Activated naive CD8-positive, alpha-beta T cell treated with anti-CD3 and anti-CD28 coated beads, Interleukin-2, amount 10 ng/mL, durations not matched to agents 7 days and 5 days (primary cell): ENCODE measurements at regions of chr12 and their contacts with region 1.

Region 1: DNA sequence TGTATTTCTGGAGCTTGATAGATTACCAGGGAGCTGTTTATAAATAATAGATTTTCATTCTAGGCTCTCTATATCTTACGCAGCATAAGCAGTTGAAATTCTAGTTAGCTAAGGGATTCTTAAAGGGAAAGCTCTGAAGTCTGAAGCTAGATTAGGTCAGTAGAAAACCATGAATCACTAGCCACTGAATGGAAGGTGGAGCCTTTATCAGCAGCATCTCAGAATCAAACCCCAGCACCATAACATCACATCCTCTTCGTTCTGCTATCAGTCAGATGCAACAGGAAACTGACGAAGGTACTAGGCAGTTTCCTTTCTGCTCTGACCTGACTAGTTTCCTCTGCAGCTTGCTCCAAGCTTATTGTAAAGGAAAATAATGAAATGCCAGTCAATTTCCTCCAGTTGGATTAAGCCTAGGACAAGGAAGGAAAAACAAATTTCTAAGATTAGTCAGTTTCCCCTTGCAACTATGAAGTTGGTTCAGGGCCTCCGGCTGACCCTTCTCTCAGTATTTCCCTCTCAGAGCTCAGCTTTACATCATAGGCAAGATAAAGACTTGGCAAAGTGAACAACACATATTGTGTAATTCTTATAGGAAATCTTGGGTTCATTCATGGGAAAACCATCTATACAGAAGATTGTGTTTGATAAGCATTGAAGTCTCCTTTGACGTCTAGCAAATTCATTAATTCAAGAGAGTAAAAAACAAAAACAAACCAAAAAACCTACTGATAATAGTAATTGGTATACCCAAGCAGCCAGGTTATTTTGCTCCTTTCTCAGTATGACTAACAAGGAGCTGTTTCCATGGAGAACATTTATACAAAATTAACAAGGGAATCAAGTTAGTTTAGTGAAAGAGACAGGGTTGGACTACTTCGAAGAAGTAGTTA is 43.4 kb upstream of the CFAP54 start:
- DNase-seq: no peak
- ATAC-seq: peak; percentile 98
- H3K4me3 Mint-ChIP-seq: peak overlapping the region; percentile 63
- H3K27ac Mint-ChIP-seq: peak overlapping the region; percentile 92
- H3K4me1 Mint-ChIP-seq: peaks cover 40% of the 10 kb centered on the region
- H3K27me3 Mint-ChIP-seq: no peaks in the 10 kb centered on the region

Region 2: DNA sequence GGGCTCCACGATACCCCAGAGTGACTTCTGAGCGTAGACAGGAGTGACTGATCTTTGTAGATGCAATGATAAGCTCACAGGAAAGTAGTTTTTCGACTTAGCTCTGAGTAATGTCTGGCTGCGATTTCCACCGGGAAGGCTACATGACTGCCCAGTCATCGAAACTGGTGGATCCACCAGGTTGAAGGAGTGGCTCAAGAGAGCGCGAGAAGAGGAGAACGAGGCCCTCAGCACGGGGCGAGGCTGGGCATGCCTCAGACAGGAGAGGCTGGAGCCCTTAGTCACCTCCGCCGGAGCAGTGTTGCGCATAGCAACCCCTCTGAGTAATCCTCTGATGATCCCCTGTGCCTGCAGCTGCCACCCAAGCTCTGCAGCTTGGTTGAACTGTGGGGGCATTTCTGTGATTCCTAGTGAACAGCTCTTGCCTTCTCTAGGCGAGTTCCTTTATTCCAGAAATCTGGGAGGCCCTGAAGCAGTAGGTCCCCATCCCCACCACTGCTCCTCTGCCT is 226.2 kb before region 1 on chr12:
- POLR2A ChIA-PET with region 1: no interaction called
- DNase-seq: no peak
- ATAC-seq: no peak
- H3K4me3 Mint-ChIP-seq: no peak overlapping the region
- H3K27ac Mint-ChIP-seq: no peak overlapping the region
- H3K4me1 Mint-ChIP-seq: peaks cover 9% of the 10 kb centered on the region
- H3K27me3 Mint-ChIP-seq: no peaks in the 10 kb centered on the region

Region 3: GRCh38 chr12:96434107-96434506 is 11.8 kb before region 1 on chr12:
- POLR2A ChIA-PET with region 1: interaction called, 27 read pairs
- DNase-seq: peak; percentile 53
- ATAC-seq: peak; percentile 97
- H3K4me3 Mint-ChIP-seq: peak overlapping the region; percentile 59
- H3K27ac Mint-ChIP-seq: peak overlapping the region; percentile 84
- H3K4me1 Mint-ChIP-seq: peaks cover 24% of the 10 kb centered on the region
- H3K27me3 Mint-ChIP-seq: no peaks in the 10 kb centered on the region

Region 4: DNA sequence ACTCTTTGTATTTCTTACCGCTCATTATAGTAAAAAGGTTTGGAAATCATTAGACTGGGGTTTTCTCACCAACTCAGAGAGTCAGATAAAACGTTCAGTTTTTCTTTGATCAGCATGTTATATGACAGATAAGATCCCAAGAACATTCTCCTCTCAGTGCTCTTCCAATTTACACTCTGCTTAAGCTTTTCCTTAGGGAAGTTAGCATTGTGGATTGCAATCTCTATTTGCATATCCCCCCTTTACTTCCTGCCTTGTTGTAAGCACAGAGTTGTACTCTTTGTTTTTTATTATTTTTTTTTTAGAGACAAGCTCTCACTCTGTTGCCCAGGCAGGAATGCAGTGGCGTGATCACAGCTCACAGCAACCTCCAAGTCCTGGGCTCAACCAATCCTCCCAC is 32.1 kb after region 1 on chr12:
- POLR2A ChIA-PET with region 1: no interaction called
- DNase-seq: no peak
- ATAC-seq: no peak
- H3K4me3 Mint-ChIP-seq: no peak overlapping the region
- H3K27ac Mint-ChIP-seq: no peak overlapping the region
- H3K4me1 Mint-ChIP-seq: peaks cover 10% of the 10 kb centered on the region
- H3K27me3 Mint-ChIP-seq: no peaks in the 10 kb centered on the region